H1 (cell line): ENCODE measurements at regions of chr4 and their contacts with region 1.

Region 1: DNA sequence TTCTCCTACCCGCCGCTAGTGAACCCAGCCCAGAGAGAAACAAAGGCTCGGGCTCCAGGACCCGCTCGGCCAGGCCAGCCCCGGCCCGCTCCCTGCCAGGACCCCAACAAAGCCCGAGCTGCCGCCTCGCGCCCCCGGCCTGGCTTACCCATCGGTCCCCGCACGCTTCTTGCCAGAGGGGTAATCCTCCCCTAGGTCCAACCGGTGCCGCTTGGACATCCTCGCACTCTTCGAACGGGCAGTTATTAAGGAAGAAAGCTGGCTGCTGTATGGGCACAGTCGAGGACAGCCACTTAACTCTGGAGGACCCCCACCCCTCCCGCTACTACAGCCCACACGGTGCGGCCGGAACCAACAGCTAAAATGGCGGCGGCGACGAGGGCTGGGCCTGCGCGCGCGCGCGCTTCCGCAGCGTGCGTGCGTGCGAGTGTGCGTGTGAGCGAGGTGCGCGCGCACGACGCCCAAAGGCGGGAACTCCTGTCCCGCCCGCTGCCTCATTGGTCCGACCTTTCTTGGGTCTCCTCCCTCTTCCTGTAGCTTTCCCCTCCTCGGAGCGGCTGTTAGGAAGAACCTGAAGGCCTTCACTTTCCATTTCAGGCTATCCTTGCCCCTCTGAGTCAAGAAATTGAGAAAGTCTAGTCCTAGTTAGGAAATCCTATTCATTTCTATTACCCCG is at the start of gene DHX15:
- DNase-seq: peak; percentile 91 to 95
- H3K4me3 ChIP-seq: peak within 1 kb of the TSS; percentile 88 to 98 (median 96)
- H3K27ac ChIP-seq: peak within 1 kb of the TSS; percentile 99
- H3K4me1 ChIP-seq: peaks cover 0 to 8% (median 0%) of the 10 kb centered on the region in 4 experiments; a peak in 2 of 7 replicates
- H3K27me3 ChIP-seq: no peaks in the 10 kb centered on the region
- CTCF ChIP-seq: no peak
- EP300 ChIP-seq: no peak
- POLR2A ChIP-seq: peak; percentile 90 to 96
- RAD21 ChIP-seq: no peak
- total RNA-seq, gene DHX15: 264 and 286 TPM in 2 replicates

Region 2: GRCh38 chr4:24527371-24527770 is 56.9 kb before region 1 on chr4:
- CTCF ChIA-PET with region 1: no interaction called
- POLR2A ChIA-PET with region 1: no interaction called
- DNase-seq: no peak
- H3K4me3 ChIP-seq: no peak overlapping the region
- H3K27ac ChIP-seq: no peak overlapping the region
- H3K4me1 ChIP-seq: no peaks in the 10 kb centered on the region
- H3K27me3 ChIP-seq: no peaks in the 10 kb centered on the region
- CTCF ChIP-seq: no peak
- EP300 ChIP-seq: no peak
- POLR2A ChIP-seq: no peak
- RAD21 ChIP-seq: no peak

Region 3: GRCh38 chr4:24570574-24571236 is 13.6 kb before region 1 on chr4:
- CTCF ChIA-PET with region 1: interaction called, 5 read pairs
- POLR2A ChIA-PET with region 1: interaction called, 78 read pairs
- DNase-seq: no peak
- H3K4me3 ChIP-seq: no peak overlapping the region
- H3K27ac ChIP-seq: no peak overlapping the region
- H3K4me1 ChIP-seq: peaks cover 0 to 7% (median under 1%) of the 10 kb centered on the region in 4 experiments; a peak in 2 of 7 replicates
- H3K27me3 ChIP-seq: no peaks in the 10 kb centered on the region
- CTCF ChIP-seq: no peak
- EP300 ChIP-seq: no peak
- POLR2A ChIP-seq: no peak
- RAD21 ChIP-seq: no peak

Region 4: GRCh38 chr4:24594891-24595290 is 10.6 kb after region 1 on chr4:
- CTCF ChIA-PET with region 1: no interaction called
- POLR2A ChIA-PET with region 1: interaction called, 27 read pairs
- DNase-seq: no peak
- H3K4me3 ChIP-seq: no peak overlapping the region
- H3K27ac ChIP-seq: no peak overlapping the region
- H3K4me1 ChIP-seq: no peaks in the 10 kb centered on the region
- H3K27me3 ChIP-seq: no peaks in the 10 kb centered on the region
- CTCF ChIP-seq: no peak
- EP300 ChIP-seq: no peak
- POLR2A ChIP-seq: no peak
- RAD21 ChIP-seq: no peak

Region 5: GRCh38 chr4:24657768-24658617 is 73.7 kb after region 1 on chr4:
- CTCF ChIA-PET with region 1: interaction called, 3 read pairs
- POLR2A ChIA-PET with region 1: interaction called, 40 read pairs
- DNase-seq: no peak
- H3K4me3 ChIP-seq: peak overlapping the region in 1 of 4 experiments; percentile 3; a peak in 1 of 8 replicates
- H3K27ac ChIP-seq: no peak overlapping the region; the same call in 1 of the 2 replicates
- H3K4me1 ChIP-seq: peaks cover 7 to 42% (median 32%) of the 10 kb centered on the region in 4 experiments
- H3K27me3 ChIP-seq: no peaks in the 10 kb centered on the region; a peak in 1 of 7 replicates
- CTCF ChIP-seq: no peak
- EP300 ChIP-seq: no peak
- POLR2A ChIP-seq: no peak
- RAD21 ChIP-seq: no peak

Region 6: DNA sequence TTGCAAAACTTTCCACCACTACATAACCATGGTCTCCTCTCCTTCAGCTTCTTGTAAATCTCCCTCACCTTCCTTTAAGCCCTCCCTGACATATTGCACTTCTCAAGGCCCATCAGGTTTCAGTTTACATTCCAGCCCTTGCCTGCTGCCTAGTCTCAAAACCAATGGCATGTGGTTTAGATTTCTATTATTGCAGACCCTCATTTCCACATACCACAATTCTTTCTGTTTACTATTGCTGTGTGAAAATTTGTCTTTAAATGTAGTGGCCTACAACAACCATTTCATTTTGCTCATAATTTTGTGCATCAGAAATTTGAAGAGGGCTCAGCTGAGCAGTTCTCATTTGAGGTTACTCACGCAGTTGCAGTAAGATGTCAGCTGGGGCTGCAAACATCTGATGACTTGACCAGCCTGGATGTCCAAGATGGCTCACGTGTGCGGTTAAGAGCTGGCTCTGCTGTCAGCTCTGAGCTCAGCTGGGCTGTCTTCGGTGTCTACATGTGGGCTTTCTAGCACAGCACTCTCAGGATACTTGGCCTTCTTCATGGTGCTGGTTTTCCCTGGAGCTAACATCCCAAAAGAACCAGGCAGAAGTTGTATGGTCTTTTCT is 181.2 kb after region 1 on chr4:
- CTCF ChIA-PET with region 1: no interaction called
- POLR2A ChIA-PET with region 1: no interaction called
- DNase-seq: no peak
- H3K4me3 ChIP-seq: no peak overlapping the region
- H3K27ac ChIP-seq: no peak overlapping the region
- H3K4me1 ChIP-seq: peaks cover 0 to 5% (median 4%) of the 10 kb centered on the region in 4 experiments; a peak in 2 of 7 replicates
- H3K27me3 ChIP-seq: no peaks in the 10 kb centered on the region
- CTCF ChIP-seq: no peak
- EP300 ChIP-seq: no peak
- POLR2A ChIP-seq: no peak
- RAD21 ChIP-seq: no peak

Region 7: GRCh38 chr4:24778464-24779225 is 194.3 kb after region 1 on chr4:
- CTCF ChIA-PET with region 1: no interaction called
- POLR2A ChIA-PET with region 1: no interaction called
- DNase-seq: no peak
- H3K4me3 ChIP-seq: no peak overlapping the region
- H3K27ac ChIP-seq: no peak overlapping the region
- H3K4me1 ChIP-seq: peaks cover 0 to 3% (median 0%) of the 10 kb centered on the region in 4 experiments; a peak in 1 of 7 replicates
- H3K27me3 ChIP-seq: peaks cover 0 to 2% (median 0%) of the 10 kb centered on the region in 4 experiments; a peak in 1 of 7 replicates
- CTCF ChIP-seq: no peak
- EP300 ChIP-seq: no peak
- POLR2A ChIP-seq: no peak
- RAD21 ChIP-seq: no peak

Region 8: GRCh38 chr4:24876456-24876855 is 292.1 kb after region 1 on chr4:
- CTCF ChIA-PET with region 1: no interaction called
- POLR2A ChIA-PET with region 1: no interaction called
- DNase-seq: no peak
- H3K4me3 ChIP-seq: no peak overlapping the region
- H3K27ac ChIP-seq: no peak overlapping the region
- H3K4me1 ChIP-seq: peaks cover 0 to 2% (median 0%) of the 10 kb centered on the region in 4 experiments; a peak in 3 of 7 replicates
- H3K27me3 ChIP-seq: no peaks in the 10 kb centered on the region
- CTCF ChIP-seq: no peak
- EP300 ChIP-seq: no peak
- POLR2A ChIP-seq: no peak
- RAD21 ChIP-seq: no peak